Calu3 (cell line): ENCODE measurements at regions of chr18 and their contacts with region 1.

Region 1: DNA sequence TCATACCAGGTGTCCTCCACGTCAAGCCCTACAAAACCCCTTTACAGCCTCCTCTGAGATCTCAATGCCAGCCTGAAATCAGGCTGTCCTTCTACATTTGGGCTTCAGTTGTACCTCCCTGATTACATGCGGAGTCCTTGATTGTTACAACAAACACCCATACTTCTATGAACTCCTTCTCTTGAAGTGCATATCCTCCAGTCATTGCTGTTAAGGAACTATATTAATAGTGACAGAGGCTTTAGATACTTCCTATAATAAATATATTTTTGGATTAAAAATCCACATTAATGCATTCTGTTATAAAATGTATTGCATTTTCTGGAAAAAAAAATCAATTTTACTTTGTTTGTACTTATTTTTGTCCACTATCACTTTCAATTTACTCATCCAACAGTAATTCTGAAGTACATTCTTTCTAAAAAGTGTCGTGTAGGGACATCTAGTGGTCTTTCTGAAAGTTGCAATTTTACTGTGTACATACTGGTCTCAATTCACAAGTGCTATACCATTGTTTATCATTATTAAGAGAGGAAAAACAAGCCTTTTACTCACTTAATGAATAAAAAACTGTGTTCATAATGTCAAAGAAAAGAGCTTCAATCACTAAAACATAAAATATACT is 316.4 kb downstream of the DSEL start:
- DNase-seq: peak; percentile 13
- H3K4me3 Mint-ChIP-seq: no peak overlapping the region
- H3K27ac Mint-ChIP-seq: no peak overlapping the region
- H3K4me1 Mint-ChIP-seq: no peaks in the 10 kb centered on the region
- H3K27me3 Mint-ChIP-seq: no peaks in the 10 kb centered on the region
- CTCF ChIP-seq: no peak

Region 2: GRCh38 chr18:66749030-66749429 is 451.1 kb before region 1 on chr18:
- CTCF ChIA-PET with region 1: no interaction called
- intact Hi-C with region 1: loop called (anchors 5 kb)
- DNase-seq: peak; percentile 34
- H3K4me3 Mint-ChIP-seq: no peak overlapping the region
- H3K27ac Mint-ChIP-seq: no peak overlapping the region
- H3K4me1 Mint-ChIP-seq: peaks cover 25% of the 10 kb centered on the region
- H3K27me3 Mint-ChIP-seq: no peaks in the 10 kb centered on the region
- CTCF ChIP-seq: no peak

Region 3: DNA sequence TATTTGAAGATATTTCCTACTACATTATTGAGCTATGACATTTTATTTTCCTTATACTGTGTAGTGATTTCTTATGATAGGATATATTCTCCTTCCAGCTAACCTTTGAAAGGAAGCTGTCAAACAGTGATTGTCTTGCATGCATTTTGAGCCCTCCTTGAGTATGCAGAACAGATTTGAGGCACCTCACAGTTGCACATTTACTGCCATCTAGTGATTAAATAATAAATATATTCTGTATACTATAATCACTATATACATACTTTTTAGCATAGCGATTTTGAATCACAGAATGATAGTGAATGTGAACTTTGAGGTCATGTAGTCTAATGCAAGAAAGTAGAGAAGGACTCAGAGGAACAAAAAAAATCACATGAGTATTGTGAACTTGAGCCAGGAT is 327.8 kb before region 1 on chr18:
- CTCF ChIA-PET with region 1: no interaction called
- intact Hi-C with region 1: loop called (anchors 5 kb)
- DNase-seq: no peak
- H3K4me3 Mint-ChIP-seq: no peak overlapping the region
- H3K27ac Mint-ChIP-seq: no peak overlapping the region
- H3K4me1 Mint-ChIP-seq: peaks cover 13% of the 10 kb centered on the region
- H3K27me3 Mint-ChIP-seq: no peaks in the 10 kb centered on the region
- CTCF ChIP-seq: no peak

Region 4: DNA sequence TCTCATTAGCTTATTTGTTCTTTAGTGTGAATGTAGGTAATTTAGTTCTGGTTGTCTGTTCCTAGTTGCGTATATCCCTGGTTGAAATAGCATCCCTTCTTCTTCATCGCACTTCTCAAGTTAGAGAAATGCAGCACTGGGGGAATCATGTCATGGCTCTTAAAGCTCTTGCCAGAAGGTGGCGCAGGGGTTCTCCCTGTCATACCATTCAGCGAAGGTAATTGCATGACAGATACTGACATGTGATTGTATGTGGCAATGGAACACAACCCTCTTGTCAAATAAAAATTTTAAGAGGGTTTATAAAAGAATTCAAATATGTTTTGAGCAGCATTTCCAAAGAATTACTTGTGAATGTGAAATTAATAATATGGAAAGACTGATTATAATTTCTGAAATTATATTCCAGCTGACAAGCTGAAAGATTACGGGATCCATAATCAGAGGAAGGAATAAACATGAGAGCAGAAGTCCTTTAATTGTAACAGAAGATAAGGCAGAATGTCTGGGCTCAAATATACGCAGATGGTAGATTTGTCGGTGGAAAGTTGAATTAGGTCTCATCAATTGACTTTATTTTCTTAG is 95.3 kb before region 1 on chr18:
- CTCF ChIA-PET with region 1: no interaction called
- intact Hi-C with region 1: loop called (anchors 1 kb)
- DNase-seq: peak; percentile 75
- H3K4me3 Mint-ChIP-seq: no peak overlapping the region
- H3K27ac Mint-ChIP-seq: peak overlapping the region; percentile 37
- H3K4me1 Mint-ChIP-seq: peaks cover 23% of the 10 kb centered on the region
- H3K27me3 Mint-ChIP-seq: no peaks in the 10 kb centered on the region
- CTCF ChIP-seq: peak; percentile 62